AG04450 (cell line): ENCODE measurements at regions of chr11 and their contacts with region 1.

Region 1: GRCh38 chr11:76318744-76319384 is 62.1 kb downstream of the THAP12 start:
- DNase-seq: peak; percentile 24
- H3K4me3 ChIP-seq: no peak overlapping the region
- H3K27ac ChIP-seq: no peak overlapping the region
- H3K27me3 ChIP-seq: peaks cover 24% of the 10 kb centered on the region
- CTCF ChIP-seq: peak; percentile 91

Region 2: GRCh38 chr11:75802913-75803820 is 515.7 kb before region 1 on chr11:
- CTCF ChIA-PET with region 1: interaction called, 18 read pairs
- POLR2A ChIA-PET with region 1: no interaction called
- DNase-seq: peak; percentile 37
- H3K4me3 ChIP-seq: no peak overlapping the region
- H3K27ac ChIP-seq: no peak overlapping the region
- H3K27me3 ChIP-seq: peaks cover 3% of the 10 kb centered on the region
- CTCF ChIP-seq: peak; percentile 95

Region 3: GRCh38 chr11:75896843-75897419 is 421.9 kb before region 1 on chr11:
- CTCF ChIA-PET with region 1: interaction called, 28 read pairs
- POLR2A ChIA-PET with region 1: no interaction called
- DNase-seq: peak; percentile 7
- H3K4me3 ChIP-seq: no peak overlapping the region
- H3K27ac ChIP-seq: no peak overlapping the region
- H3K27me3 ChIP-seq: no peaks in the 10 kb centered on the region
- CTCF ChIP-seq: peak; percentile 67

Region 4: DNA sequence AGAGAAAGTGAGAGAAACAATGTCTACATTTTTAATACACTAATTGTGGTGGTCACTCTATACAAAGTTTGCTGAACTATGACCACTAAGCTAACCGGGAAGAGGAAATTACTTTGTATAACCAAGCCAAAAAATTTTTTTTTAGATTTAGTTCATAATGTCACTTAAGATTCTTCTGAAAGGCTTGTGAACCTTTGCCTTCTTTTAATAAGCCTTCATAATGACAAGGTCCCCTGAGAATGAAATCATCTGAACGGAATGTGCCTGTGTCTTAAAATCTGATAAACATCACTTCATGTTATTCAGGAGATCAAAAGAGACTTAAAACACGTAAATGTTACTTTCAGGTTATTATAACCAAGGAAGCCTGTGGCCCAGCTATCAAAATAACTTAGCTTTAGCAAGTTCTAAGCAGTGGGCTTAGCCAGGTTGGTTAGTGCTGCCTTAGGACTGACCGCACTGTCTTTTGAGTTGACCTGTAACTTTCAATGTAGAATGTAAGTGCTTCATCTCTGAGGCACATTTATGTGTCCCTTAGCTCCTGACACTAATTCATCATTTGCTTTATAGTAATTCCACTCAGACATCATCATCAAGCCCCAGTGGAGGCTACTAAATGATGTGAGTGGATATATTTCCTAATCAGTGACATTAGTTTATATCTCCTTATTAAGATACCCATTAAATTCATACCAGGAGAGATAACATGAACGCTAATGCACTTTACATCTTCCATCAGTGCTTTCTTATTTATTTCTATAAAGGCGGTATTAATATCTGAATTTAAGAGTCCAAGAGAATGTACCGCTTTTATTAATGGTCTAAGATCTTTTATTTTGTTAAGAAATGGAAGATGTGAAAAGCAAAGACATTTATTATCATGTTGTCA is 235.1 kb before region 1 on chr11:
- CTCF ChIA-PET with region 1: no interaction called
- POLR2A ChIA-PET with region 1: no interaction called
- DNase-seq: no peak
- H3K4me3 ChIP-seq: no peak overlapping the region
- H3K27ac ChIP-seq: no peak overlapping the region
- H3K27me3 ChIP-seq: no peaks in the 10 kb centered on the region
- CTCF ChIP-seq: no peak

Region 5: DNA sequence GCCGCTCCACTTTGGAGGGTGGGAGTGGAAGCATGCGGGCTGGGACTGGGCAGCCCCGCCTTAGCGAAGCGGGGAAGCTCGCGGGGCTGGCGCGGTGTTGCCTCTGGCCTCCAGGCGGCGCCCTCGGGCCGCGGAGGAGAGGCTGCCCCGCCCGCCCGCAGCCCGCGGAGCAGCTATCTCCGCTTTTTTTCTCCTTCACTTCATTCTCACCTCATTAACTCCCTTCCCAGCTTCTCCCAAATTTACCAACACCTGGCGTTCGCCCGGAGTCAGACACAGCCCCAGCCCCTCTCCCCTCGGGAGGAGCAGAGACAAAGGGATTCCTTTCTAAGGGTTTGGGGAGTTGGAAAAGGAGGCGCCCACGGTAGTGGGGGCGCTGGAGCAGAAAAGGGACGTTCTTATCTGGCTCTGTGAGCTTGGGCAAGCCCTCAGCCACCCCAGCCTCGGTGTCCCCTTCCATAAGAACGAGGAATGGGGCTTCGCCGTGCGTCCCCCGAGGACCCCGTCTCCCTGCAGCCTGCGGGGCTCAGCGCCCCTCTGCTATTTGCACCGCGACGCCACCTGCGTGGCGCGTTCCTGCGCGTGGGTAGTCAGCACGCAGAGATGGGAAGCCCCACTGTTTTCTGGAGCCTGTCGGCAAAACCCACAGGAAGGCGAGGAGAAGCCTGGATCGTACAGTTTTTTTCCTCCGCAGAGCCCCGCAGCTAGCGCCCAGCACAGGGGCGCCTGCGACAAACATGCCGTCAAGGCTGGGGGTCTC is 111.0 kb before region 1 on chr11:
- CTCF ChIA-PET with region 1: interaction called, 55 read pairs
- POLR2A ChIA-PET with region 1: interaction called, 3 read pairs
- DNase-seq: no peak
- H3K4me3 ChIP-seq: peak overlapping the region; percentile 49
- H3K27ac ChIP-seq: no peak overlapping the region
- H3K27me3 ChIP-seq: peaks cover 85% of the 10 kb centered on the region
- CTCF ChIP-seq: peak; percentile 84

Region 6: DNA sequence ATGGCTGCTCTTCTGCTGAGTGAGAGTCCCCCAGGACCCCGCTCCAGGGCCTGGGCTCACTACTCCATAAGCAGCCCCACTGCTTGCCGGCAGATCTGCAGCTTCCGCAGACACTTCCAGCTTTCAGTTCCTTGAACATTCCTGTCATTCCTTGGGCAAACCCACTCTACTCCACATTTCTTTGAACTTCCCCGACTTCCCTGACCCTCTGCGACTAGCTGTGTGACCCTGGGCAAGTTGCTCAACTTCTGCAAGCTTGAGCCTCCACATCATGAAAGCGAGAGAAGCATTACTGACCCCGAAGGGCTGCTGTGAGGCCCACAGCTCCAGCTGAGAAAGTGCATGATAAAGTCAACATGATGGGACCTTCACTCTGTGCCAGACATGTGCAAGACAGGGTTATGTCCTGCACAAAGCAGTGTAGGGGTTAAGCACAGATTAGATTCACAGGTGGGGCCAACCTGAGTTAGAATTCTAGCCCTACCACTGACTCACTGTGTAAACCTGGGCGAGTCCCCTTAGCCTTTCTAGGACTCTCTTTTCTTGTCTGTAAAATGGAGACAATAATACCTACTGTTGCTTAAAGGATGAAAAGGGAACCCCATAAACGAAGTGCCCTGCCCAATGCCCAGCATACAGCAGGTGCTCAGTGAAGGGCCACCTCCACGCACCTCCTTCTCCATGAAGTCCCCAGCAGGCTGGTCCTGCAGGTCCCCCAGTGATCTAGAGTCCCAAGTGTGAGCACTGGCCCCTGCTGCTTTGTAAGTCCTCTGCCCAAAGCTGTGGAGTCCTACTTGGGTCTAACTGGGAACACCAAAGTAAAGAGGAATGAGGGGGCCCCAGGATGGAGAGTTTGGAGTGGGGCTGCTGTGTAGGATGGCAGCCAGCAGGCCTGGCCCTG is 10.5 kb after region 1 on chr11:
- CTCF ChIA-PET with region 1: interaction called, 14 read pairs
- POLR2A ChIA-PET with region 1: no interaction called
- DNase-seq: peak; percentile 23
- H3K4me3 ChIP-seq: no peak overlapping the region
- H3K27ac ChIP-seq: no peak overlapping the region
- H3K27me3 ChIP-seq: peaks cover 14% of the 10 kb centered on the region
- CTCF ChIP-seq: no peak

Region 7: DNA sequence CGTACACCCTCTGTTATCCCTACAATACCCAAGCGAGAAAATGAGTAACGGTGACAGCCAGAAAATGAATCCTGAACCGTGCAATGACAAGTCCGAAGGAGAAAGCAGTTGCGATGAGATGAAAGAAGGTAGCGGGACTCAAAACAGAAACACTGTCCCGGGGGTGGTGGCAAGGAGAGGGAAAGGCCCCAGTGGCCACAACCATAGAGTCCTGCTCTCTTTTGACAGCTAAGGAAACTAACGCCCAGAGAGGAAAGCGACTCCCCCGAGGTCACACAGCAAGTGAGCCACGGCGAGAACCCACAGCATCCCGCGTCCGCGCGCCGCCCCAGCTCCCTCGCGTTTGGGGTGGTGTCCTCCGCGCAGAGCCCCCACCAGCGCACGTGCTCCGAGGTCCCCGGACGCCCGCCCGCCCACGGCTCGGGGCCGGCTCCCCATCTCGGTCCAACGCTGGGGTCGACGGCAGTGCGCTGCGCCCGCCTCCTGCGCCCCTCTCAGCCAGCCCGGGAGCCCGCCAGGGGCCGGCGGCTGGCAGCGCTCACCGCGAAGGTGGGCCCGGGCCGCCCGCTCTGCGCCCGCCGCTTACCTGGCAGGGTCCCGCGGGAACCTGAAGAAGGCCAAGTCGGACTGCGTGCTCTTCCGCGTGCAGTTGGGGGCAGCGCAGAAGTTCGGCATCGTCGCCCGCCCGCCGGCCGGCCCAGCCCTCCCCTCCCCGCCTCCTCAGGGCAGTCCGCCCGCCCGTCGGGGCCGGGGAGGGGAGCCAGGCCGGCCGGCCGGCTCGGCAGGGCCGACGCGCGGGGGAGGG is 61.5 kb after region 1 on chr11:
- CTCF ChIA-PET with region 1: no interaction called
- POLR2A ChIA-PET with region 1: interaction called, 10 read pairs
- DNase-seq: no peak
- H3K4me3 ChIP-seq: peak overlapping the region; percentile 85
- H3K27ac ChIP-seq: peak overlapping the region; percentile 48
- H3K27me3 ChIP-seq: no peaks in the 10 kb centered on the region
- CTCF ChIP-seq: 0 out of 2 replicates have a peak, but pooled peaks have one; percentile 3